Caco-2 (cell line): ENCODE measurements at regions of chr18 and their contacts with region 1.

Region 1: DNA sequence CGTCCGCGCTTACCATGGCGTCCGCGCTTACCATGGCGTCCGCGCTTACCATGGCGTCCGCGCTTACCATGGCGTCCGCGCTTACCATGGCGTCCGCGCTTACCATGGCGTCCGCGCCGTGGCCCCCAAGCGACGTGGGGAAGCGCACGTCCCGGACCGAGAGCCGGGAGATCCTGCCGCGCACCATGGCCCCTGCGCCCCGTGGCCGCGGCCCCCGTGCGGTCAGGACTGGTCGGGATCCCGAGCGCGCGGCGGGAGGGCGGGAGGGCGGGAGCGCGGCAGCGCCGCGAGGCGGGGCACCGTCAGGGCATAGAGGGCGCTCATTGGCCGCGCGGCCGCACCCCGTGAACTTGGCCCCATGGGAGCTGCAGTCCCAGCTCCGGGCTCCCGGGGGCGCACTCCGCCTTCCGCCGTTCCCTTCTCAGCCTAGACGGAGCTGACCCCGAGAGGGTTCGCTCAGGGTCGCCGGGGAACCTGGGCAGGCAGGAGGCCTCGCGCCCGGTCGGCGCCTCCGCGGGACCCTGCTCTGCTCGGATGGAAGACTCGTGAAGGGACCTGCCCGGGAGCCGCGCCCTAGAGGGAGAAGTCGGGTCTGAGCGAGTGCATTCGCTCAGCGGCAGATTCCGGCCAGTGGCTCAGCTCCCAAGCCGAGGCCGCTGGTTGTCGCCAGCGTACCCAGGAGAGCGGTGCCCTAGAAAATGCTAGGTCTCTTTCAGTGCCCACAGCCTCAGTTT is at the start of gene ENOSF1:
- DNase-seq: peak; percentile 88 to 92
- H3K4me3 ChIP-seq: peak within 1 kb of the TSS; percentile 76
- H3K4me3 Mint-ChIP-seq: peak within 1 kb of the TSS; percentile 81
- H3K27ac Mint-ChIP-seq: peak within 1 kb of the TSS; percentile 81
- H3K4me1 ChIP-seq: peaks cover 11% of the 10 kb centered on the region; the same call in 1 of the 2 replicates
- H3K4me1 Mint-ChIP-seq: peaks cover 19% of the 10 kb centered on the region
- H3K27me3 ChIP-seq: no peaks in the 10 kb centered on the region
- H3K27me3 Mint-ChIP-seq: no peaks in the 10 kb centered on the region
- CTCF ChIP-seq: peak; percentile 82 to 84
- total RNA-seq, gene ENOSF1: 112 and 114 TPM in 2 replicates

Region 2: DNA sequence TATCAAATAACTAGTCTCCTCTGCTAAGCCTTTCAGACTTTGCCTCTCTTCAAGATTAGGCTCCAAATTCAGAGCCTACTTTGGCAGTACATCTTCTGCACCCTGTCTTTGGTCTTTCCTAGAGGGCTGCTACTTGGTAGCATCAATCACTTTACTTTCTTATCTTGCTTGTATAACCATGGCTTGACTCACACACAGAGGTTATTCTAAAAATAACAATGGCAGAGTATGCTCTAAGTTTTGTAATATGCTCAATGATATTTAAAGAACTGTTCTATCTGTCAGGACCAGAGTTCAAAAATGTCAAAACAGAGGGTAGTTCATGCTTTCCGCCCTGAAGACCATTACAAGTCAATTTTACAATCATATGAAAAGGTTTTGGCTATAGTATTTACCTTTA is 472.4 kb before region 1 on chr18:
- CTCF ChIA-PET with region 1: no interaction called
- POLR2A ChIA-PET with region 1: no interaction called
- intact Hi-C with region 1: no loop called
- DNase-seq: no peak
- H3K4me3 ChIP-seq: no peak overlapping the region
- H3K4me3 Mint-ChIP-seq: no peak overlapping the region
- H3K27ac Mint-ChIP-seq: no peak overlapping the region
- H3K4me1 ChIP-seq: no peaks in the 10 kb centered on the region
- H3K4me1 Mint-ChIP-seq: no peaks in the 10 kb centered on the region
- H3K27me3 ChIP-seq: no peaks in the 10 kb centered on the region
- H3K27me3 Mint-ChIP-seq: no peaks in the 10 kb centered on the region
- CTCF ChIP-seq: no peak

Region 3: DNA sequence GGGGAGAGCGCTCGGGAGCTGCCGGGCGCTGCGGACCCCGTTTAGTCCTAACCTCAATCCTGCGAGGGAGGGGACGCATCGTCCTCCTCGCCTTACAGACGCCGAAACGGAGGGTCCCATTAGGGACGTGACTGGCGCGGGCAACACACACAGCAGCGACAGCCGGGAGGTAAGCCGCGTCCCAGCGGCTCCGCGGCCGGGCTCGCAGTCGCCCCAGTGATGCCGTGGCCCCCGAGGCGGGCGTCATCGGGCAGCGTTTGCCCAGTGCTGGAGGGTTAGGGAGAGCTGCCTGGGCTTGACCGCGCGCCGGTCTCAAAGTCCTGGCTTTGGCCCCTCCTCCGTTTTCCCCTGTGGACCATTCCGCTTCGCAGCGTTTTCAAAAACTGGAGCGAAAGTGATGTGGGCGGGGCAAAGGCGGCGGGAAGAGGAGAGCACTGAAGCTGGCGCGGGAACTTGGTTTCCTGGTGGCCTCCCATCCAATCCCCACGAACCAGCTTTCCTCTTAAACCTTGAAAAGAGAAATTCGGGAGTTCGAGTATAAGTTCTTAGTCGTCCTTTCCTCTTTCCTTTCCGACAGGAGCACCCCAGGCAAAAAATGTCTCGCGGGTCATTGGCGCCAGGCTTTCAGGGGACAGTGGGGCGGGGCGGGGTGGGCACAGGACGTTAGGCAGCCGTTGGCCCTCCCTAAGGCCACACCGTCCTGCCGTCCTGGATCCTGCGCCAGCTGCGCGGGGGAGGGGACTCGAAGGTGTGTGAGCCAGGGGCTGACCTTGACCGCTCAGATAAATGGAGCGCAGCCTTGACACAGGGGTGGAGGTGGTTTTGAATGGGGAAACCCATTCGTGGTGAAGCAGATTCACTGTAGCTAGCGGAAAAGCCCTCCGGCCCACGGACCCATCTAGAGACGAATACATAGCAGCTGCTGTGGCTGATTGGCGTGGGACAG is 54.3 kb before region 1 on chr18:
- CTCF ChIA-PET with region 1: interaction called, 3 read pairs
- POLR2A ChIA-PET with region 1: no interaction called
- intact Hi-C with region 1: loop called (anchors 5 kb)
- DNase-seq: peak; percentile 94
- H3K4me3 ChIP-seq: peak overlapping the region; percentile 82
- H3K4me3 Mint-ChIP-seq: peak overlapping the region; percentile 89
- H3K27ac Mint-ChIP-seq: peak overlapping the region; percentile 78
- H3K4me1 ChIP-seq: no peaks in the 10 kb centered on the region
- H3K4me1 Mint-ChIP-seq: no peaks in the 10 kb centered on the region
- H3K27me3 ChIP-seq: no peaks in the 10 kb centered on the region
- H3K27me3 Mint-ChIP-seq: no peaks in the 10 kb centered on the region
- CTCF ChIP-seq: no peak

Region 4: DNA sequence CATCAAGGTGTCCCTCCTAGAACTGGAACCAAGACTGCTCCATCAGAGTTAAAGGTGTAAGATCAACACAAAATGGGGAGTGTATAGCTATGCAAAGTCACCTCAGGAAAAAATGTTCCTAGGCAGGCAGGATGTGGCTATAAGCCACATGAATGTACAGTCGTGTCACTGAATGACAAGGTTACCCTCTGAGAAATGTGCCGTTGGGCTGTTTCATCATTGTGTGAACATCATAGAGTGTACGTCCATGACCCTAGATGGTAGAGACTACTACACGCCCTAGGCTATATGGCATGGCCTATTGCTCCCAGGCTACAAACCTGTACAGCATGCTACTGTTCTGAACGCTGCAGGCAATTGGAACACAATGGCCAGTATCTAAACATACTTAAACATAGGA is 30.6 kb before region 1 on chr18:
- CTCF ChIA-PET with region 1: no interaction called
- POLR2A ChIA-PET with region 1: no interaction called
- intact Hi-C with region 1: loop called (anchors 2 kb)
- DNase-seq: no peak
- H3K4me3 ChIP-seq: no peak overlapping the region
- H3K4me3 Mint-ChIP-seq: no peak overlapping the region
- H3K27ac Mint-ChIP-seq: peak overlapping the region; percentile 71
- H3K4me1 ChIP-seq: peaks cover 49% of the 10 kb centered on the region
- H3K4me1 Mint-ChIP-seq: peaks cover 35% of the 10 kb centered on the region
- H3K27me3 ChIP-seq: no peaks in the 10 kb centered on the region
- H3K27me3 Mint-ChIP-seq: no peaks in the 10 kb centered on the region
- CTCF ChIP-seq: no peak

Region 5: GRCh38 chr18:830315-830901 is 117.8 kb after region 1 on chr18:
- CTCF ChIA-PET with region 1: interaction called, 13 read pairs
- POLR2A ChIA-PET with region 1: interaction called, 6 read pairs
- intact Hi-C with region 1: loop called (anchors 1 kb)
- DNase-seq: no peak
- H3K4me3 ChIP-seq: no peak overlapping the region
- H3K4me3 Mint-ChIP-seq: no peak overlapping the region
- H3K27ac Mint-ChIP-seq: no peak overlapping the region
- H3K4me1 ChIP-seq: peaks cover 10% of the 10 kb centered on the region; the same call in 1 of the 2 replicates
- H3K4me1 Mint-ChIP-seq: peaks cover 9% of the 10 kb centered on the region
- H3K27me3 ChIP-seq: no peaks in the 10 kb centered on the region
- H3K27me3 Mint-ChIP-seq: no peaks in the 10 kb centered on the region
- CTCF ChIP-seq: no peak

Region 6: GRCh38 chr18:839224-840022 is 126.9 kb after region 1 on chr18:
- CTCF ChIA-PET with region 1: interaction called, 21 read pairs
- POLR2A ChIA-PET with region 1: interaction called, 3 read pairs
- intact Hi-C with region 1: no loop called
- DNase-seq: peak; percentile 78 to 86
- H3K4me3 ChIP-seq: no peak overlapping the region
- H3K4me3 Mint-ChIP-seq: no peak overlapping the region
- H3K27ac Mint-ChIP-seq: no peak overlapping the region
- H3K4me1 ChIP-seq: no peaks in the 10 kb centered on the region; the same call in 1 of the 2 replicates
- H3K4me1 Mint-ChIP-seq: peaks cover 13% of the 10 kb centered on the region
- H3K27me3 ChIP-seq: no peaks in the 10 kb centered on the region
- H3K27me3 Mint-ChIP-seq: no peaks in the 10 kb centered on the region
- CTCF ChIP-seq: peak; percentile 84 to 92